PC-3 (cell line): ENCODE measurements at regions of chr5 and their contacts with region 1.

Region 1: GRCh38 chr5:72860499-72860898 is 44.0 kb downstream of the TNPO1 start:
- DNase-seq: no peak
- ATAC-seq: no peak
- H3K4me3 ChIP-seq: no peak overlapping the region
- H3K27ac ChIP-seq: no peak overlapping the region
- H3K4me1 ChIP-seq: no peaks in the 10 kb centered on the region
- H3K27me3 ChIP-seq: no peaks in the 10 kb centered on the region
- CTCF ChIP-seq: no peak

Region 2: GRCh38 chr5:72908664-72909063 is 48.2 kb after region 1 on chr5:
- CTCF ChIA-PET with region 1: interaction called, 3 read pairs
- POLR2A ChIA-PET with region 1: interaction called, 21 read pairs
- intact Hi-C with region 1: no loop called
- DNase-seq: no peak
- ATAC-seq: no peak
- H3K4me3 ChIP-seq: no peak overlapping the region
- H3K27ac ChIP-seq: no peak overlapping the region
- H3K4me1 ChIP-seq: no peaks in the 10 kb centered on the region
- H3K27me3 ChIP-seq: no peaks in the 10 kb centered on the region
- CTCF ChIP-seq: no peak